Ovary (tissue), 10 donors: ENCODE measurements at regions of chr13 and their contacts with region 1.

Region 1: DNA sequence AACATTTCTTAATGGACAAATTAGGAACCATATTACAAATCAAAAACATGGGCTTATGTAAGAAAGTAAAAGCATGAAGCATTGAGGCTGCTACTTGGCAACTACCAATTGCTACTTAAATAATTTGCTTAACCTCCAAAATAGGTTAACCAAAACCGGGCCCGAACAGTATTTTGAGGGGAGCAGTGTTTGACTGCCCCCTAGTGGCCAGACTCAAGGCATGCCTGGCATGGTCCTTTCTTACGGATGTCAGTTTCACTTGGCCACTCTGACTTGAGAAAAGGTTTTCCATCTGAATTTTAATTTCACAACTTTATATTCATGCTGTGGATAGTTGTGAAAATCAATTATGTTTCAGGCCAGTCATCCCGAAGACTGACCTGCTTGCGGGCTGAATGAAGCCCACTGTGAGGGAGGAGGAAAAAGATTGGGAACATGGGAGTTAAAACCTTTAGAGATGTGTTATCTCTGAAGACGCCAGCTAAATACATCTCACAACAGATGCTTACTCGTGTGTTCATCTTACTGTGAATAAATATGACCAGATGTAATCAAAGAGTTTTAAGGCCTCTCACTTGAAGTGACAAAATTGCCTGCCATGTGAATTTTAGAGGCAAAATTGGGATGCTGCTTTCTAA is 2.9 kb downstream of the RXFP2 start:
- DNase-seq: peak; percentile 41 to 67 (median 63)
- H3K4me3 ChIP-seq: no peak overlapping the region
- H3K27ac ChIP-seq: no peak overlapping the region
- H3K4me1 ChIP-seq: no peaks in the 10 kb centered on the region
- H3K27me3 ChIP-seq: peaks cover 4% of the 10 kb centered on the region
- CTCF ChIP-seq: peak; percentile 43 to 79 (median 67)
- EP300 ChIP-seq: no peak
- POLR2A ChIP-seq: no peak

Region 2: GRCh38 chr13:31138515-31138914 is 603.7 kb before region 1 on chr13:
- intact Hi-C with region 1: no loop called
- DNase-seq: no peak
- H3K4me3 ChIP-seq: no peak overlapping the region
- H3K27ac ChIP-seq: no peak overlapping the region
- H3K4me1 ChIP-seq: no peaks in the 10 kb centered on the region
- H3K27me3 ChIP-seq: no peaks in the 10 kb centered on the region
- CTCF ChIP-seq: no peak
- EP300 ChIP-seq: no peak
- POLR2A ChIP-seq: no peak

Region 3: GRCh38 chr13:31431722-31432137 is 310.5 kb before region 1 on chr13:
- intact Hi-C with region 1: loop called in 2 of 4 experiments (anchors 10 kb)
- DNase-seq: peak in 3 of 5 donors; percentile 35 to 53 (median 42)
- H3K4me3 ChIP-seq: no peak overlapping the region
- H3K27ac ChIP-seq: no peak overlapping the region
- H3K4me1 ChIP-seq: no peaks in the 10 kb centered on the region
- H3K27me3 ChIP-seq: no peaks in the 10 kb centered on the region
- CTCF ChIP-seq: peak in 1 of 3 donors; percentile 14
- EP300 ChIP-seq: no peak
- POLR2A ChIP-seq: no peak

Region 4: GRCh38 chr13:31909864-31910551 is 167.8 kb after region 1 on chr13:
- intact Hi-C with region 1: no loop called
- DNase-seq: peak; percentile 20 to 63 (median 46)
- H3K4me3 ChIP-seq: no peak overlapping the region
- H3K27ac ChIP-seq: no peak overlapping the region
- H3K4me1 ChIP-seq: peaks cover 4% of the 10 kb centered on the region
- H3K27me3 ChIP-seq: no peaks in the 10 kb centered on the region
- CTCF ChIP-seq: peak; percentile 73 to 77 (median 77)
- EP300 ChIP-seq: no peak
- POLR2A ChIP-seq: no peak